K562 (cell line): ENCODE measurements at regions of chr2 and their contacts with region 1.

Region 1: GRCh38 chr2:161308178-161308955 is at the start of gene PSMD14:
- DNase-seq: peak; percentile 73 to 98 (median 82)
- ATAC-seq: peak; percentile 91
- H3K4me3 ChIP-seq: peak within 1 kb of the TSS; percentile 66
- H3K27ac ChIP-seq: peak within 1 kb of the TSS; percentile 96
- H3K4me1 ChIP-seq: peaks cover 3 to 6% of the 10 kb centered on the region in 2 experiments; a peak in 2 of 5 replicates
- H3K27me3 ChIP-seq: no peaks in the 10 kb centered on the region
- CTCF ChIP-seq: peak in 1 of 3 experiments; percentile 22; a peak in 1 of 6 replicates
- EP300 ChIP-seq: no peak; the same call in 1 of the 2 replicates
- POLR2A ChIP-seq: peak; percentile 97
- RAD21 ChIP-seq: no peak
- polyA plus RNA-seq, gene PSMD14: 496 to 515 TPM

Region 2: DNA sequence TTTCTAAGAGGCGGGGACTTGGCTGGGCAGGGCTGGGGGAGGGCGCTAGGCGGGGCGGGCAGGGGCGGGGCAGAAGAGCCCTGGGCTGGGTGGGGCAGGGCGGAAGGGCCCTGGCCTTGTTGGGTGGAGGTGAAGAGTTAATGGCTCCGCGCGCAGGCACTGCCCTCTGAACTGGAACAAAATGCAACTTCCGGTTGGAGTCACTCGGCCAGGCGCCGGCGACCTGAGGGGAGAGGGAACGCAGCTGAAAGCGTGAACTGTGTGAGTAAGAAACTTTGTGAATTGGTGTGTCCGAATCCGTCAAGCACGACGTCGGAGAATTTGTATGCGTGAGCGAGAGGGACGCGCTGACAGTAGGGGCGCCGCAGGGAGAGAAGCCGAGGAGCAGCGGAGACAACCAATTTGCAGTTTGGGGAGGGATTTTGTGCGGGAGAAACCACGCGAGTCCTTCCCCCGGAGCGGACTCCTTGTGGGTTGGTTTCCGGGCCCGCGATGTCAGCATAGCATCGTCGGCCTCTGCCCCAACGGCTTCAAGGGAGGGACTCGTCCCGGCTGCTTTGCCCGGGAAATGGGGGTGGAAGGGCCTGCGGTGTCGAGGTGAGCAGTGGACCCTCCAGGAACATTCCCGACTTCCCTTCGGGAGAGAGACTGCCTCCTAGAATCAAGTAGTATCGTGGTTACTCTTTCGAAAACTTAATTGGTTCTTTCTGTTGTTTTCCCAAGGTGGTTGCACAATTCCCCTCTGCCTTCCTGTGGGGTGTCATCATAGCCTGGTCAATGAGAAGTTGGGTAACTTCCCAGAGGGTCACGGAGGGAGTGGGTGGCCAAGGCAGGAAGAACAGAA is 147.9 kb before region 1 on chr2 and contains the start of gene TANK:
- CTCF ChIA-PET with region 1: no interaction called
- POLR2A ChIA-PET with region 1: no interaction called
- in situ Hi-C with region 1: no loop called
- intact Hi-C with region 1: loop called (anchors 2 kb)
- DNase-seq: peak; percentile 98 to 99 (median 98)
- ATAC-seq: peak; percentile 95
- H3K4me3 ChIP-seq: peak within 1 kb of the TSS; percentile 68
- H3K27ac ChIP-seq: peak within 1 kb of the TSS; percentile 93
- H3K4me1 ChIP-seq: peaks cover 0 to 7% of the 10 kb centered on the region in 2 experiments; a peak in 2 of 5 replicates
- H3K27me3 ChIP-seq: no peaks in the 10 kb centered on the region
- CTCF ChIP-seq: no peak
- EP300 ChIP-seq: no peak
- POLR2A ChIP-seq: peak; percentile 99
- RAD21 ChIP-seq: no peak
- polyA plus RNA-seq, gene TANK: 83.7 to 91.5 TPM

Region 3: DNA sequence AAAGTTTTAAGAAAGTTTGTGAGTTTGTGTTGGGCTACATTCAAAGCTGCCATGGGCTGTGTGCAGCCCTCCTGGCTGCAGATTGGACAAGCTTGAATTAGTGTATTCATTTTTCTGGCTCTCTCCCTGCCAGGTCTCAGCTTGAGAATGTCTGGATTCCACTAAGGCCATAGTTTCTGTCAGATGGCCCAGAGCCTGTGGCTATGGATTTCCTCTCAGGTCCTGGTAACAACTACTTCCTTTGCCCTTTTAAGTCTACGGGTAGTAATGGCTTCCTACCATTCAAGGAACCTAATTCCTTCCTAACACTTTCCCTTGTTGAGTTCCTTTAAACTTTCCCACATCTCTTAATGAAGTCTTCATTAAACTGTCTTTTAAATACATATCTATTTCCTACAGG is 24.4 kb before region 1 on chr2:
- CTCF ChIA-PET with region 1: no interaction called
- POLR2A ChIA-PET with region 1: interaction called, 3 read pairs
- in situ Hi-C with region 1: no loop called
- intact Hi-C with region 1: loop called (anchors 1 kb)
- DNase-seq: no peak
- ATAC-seq: no peak
- H3K4me3 ChIP-seq: no peak overlapping the region
- H3K27ac ChIP-seq: no peak overlapping the region
- H3K4me1 ChIP-seq: peaks cover 0 to 8% of the 10 kb centered on the region in 2 experiments; a peak in 1 of 5 replicates
- H3K27me3 ChIP-seq: peaks cover 0 to 6% of the 10 kb centered on the region in 2 experiments; a peak in 2 of 5 replicates
- CTCF ChIP-seq: no peak
- EP300 ChIP-seq: no peak
- POLR2A ChIP-seq: no peak
- RAD21 ChIP-seq: no peak

Region 4: GRCh38 chr2:161321944-161322648 is 13.7 kb after region 1 on chr2:
- CTCF ChIA-PET with region 1: no interaction called
- POLR2A ChIA-PET with region 1: interaction called, 11 read pairs
- in situ Hi-C with region 1: no loop called
- intact Hi-C with region 1: no loop called
- DNase-seq: no peak
- ATAC-seq: no peak; the same call in 2 of the 3 replicates
- H3K4me3 ChIP-seq: no peak overlapping the region
- H3K27ac ChIP-seq: no peak overlapping the region
- H3K4me1 ChIP-seq: no peaks in the 10 kb centered on the region
- H3K27me3 ChIP-seq: no peaks in the 10 kb centered on the region
- CTCF ChIP-seq: no peak
- EP300 ChIP-seq: no peak
- POLR2A ChIP-seq: no peak
- RAD21 ChIP-seq: no peak

Region 5: GRCh38 chr2:161335626-161336025 is 27.3 kb after region 1 on chr2:
- CTCF ChIA-PET with region 1: no interaction called
- POLR2A ChIA-PET with region 1: interaction called, 11 read pairs
- in situ Hi-C with region 1: no loop called
- intact Hi-C with region 1: no loop called
- DNase-seq: no peak
- ATAC-seq: no peak
- H3K4me3 ChIP-seq: no peak overlapping the region
- H3K27ac ChIP-seq: no peak overlapping the region; the same call in 2 of the 3 replicates
- H3K4me1 ChIP-seq: no peaks in the 10 kb centered on the region
- H3K27me3 ChIP-seq: no peaks in the 10 kb centered on the region
- CTCF ChIP-seq: no peak
- EP300 ChIP-seq: no peak
- POLR2A ChIP-seq: no peak
- RAD21 ChIP-seq: no peak

Region 6: DNA sequence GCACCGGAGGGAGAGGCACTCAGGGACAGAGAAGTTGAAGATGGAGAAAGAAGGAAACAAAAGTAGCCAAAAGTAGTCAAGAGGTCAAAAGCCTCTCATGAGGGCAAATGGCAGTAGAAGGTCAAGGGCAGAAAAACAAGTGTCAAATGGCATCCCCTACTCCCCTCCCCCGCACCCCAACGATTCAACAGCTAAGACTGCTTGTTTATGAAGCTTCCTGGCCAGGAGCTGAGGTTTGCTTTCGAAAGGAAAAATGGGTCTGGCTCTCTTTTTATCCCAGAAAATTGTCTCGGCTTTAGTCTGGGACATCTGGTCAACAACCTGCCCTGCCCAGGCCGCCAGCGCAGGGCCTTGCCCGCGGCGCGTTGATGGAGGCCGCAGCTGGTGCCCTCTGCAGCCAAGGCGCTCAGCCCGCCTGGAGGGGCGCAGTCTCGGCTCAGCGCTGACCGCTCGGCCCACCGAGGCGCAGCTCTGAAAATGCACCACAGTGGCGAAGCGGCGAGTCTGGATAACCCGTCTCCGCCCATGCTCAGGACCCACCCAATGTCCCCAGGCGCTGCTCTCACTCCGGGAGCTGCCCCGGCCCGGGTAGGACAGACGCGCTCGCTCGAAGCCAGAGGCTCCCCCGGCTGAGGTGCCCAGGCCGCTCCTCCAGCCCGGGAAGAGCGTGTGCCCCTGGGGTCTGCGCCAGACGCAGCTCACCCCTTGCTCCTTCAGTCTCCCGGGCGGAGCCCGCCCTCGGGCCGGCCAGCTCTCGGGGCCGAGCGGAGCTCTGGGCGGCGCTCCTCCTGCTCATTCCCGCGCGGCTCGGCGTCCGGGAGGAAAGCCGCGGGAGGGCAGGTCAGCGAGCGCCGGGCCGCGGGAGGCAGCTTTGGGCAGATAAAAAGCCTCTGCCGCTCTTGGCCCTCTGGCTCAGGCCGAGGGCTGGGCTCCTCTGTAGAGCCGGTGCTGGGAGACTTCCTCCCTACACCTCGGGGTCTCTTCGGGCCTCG is 106.0 kb after region 1 on chr2:
- CTCF ChIA-PET with region 1: no interaction called
- POLR2A ChIA-PET with region 1: interaction called, 3 read pairs
- in situ Hi-C with region 1: no loop called
- intact Hi-C with region 1: loop called (anchors 5 kb)
- DNase-seq: peak; percentile 30 to 60 (median 44)
- ATAC-seq: peak; percentile 85
- H3K4me3 ChIP-seq: peak overlapping the region; percentile 35
- H3K27ac ChIP-seq: no peak overlapping the region
- H3K4me1 ChIP-seq: peaks cover 8 to 28% of the 10 kb centered on the region in 2 experiments; a peak in 4 of 5 replicates
- H3K27me3 ChIP-seq: peaks cover 45 to 51% of the 10 kb centered on the region in 2 experiments
- CTCF ChIP-seq: no peak
- EP300 ChIP-seq: no peak
- POLR2A ChIP-seq: no peak
- RAD21 ChIP-seq: no peak